ENCODE measurements at regions of chr9 and their contacts with region 1.

Region 1: GRCh38 chr9:129676975-129677841 is 11.8 kb downstream of the PRRX2 start:
- DNase-seq: no peak
- H3K4me3 ChIP-seq: no peak overlapping the region
- H3K27ac ChIP-seq: peak overlapping the region in 1 of 3 donors; percentile 38
- H3K4me1 ChIP-seq: no peaks in the 10 kb centered on the region
- H3K27me3 ChIP-seq: no peaks in the 10 kb centered on the region
- CTCF ChIP-seq: no peak
- POLR2A ChIP-seq: no peak

Region 2: GRCh38 chr9:129811967-129812363 is 134.8 kb after region 1 on chr9:
- intact Hi-C with region 1: no loop called
- DNase-seq: no peak
- H3K4me3 ChIP-seq: no peak overlapping the region
- H3K27ac ChIP-seq: no peak overlapping the region
- H3K4me1 ChIP-seq: no peaks in the 10 kb centered on the region
- H3K27me3 ChIP-seq: no peaks in the 10 kb centered on the region
- CTCF ChIP-seq: no peak
- POLR2A ChIP-seq: no peak

Region 3: DNA sequence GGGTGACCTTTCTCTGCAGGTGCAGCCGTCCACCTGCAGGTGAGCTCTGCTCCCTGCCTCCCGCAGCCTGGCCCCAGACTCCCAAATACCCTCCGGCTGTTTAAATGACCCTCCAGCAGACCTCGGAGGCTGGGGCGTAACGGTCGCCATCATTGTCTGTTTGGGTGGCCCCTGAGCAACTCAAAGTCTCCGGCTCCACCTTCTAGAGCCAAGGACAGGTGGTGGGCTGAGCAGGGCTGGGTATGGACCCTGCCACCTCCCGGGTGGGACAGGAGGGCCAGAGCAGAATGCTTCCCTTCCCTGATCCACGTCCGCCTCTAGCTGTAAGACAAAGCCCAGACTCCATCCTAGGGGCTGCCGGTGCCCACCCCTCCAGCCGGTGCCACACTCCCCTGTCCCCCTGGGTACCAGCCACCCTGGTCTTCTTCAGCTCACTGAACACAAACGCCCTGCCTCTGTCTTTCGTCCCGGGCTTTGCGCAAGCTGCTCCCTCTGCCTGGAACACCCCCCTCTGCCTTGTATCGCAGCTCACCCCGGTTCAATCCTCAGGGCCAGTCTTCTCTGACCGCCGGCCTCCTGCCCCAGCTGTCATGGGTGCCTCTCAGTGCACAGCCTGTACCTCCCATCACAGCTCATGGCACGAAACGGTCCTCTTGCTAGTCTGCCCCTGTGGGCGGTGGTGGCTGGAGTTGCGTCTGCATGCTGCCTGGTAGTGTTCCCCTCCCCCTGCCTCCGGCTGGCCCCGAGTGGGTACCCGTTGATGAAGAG is 1296.1 kb after region 1 on chr9:
- intact Hi-C with region 1: loop called (anchors 10 kb)
- DNase-seq: no peak
- H3K4me3 ChIP-seq: no peak overlapping the region
- H3K27ac ChIP-seq: no peak overlapping the region
- H3K4me1 ChIP-seq: no peaks in the 10 kb centered on the region
- H3K27me3 ChIP-seq: no peaks in the 10 kb centered on the region
- CTCF ChIP-seq: no peak
- POLR2A ChIP-seq: no peak

Measured in thyroid gland (tissue), 4 donors.